ENCODE measurements at regions of chr2 and their contacts with region 1.

Region 1: DNA sequence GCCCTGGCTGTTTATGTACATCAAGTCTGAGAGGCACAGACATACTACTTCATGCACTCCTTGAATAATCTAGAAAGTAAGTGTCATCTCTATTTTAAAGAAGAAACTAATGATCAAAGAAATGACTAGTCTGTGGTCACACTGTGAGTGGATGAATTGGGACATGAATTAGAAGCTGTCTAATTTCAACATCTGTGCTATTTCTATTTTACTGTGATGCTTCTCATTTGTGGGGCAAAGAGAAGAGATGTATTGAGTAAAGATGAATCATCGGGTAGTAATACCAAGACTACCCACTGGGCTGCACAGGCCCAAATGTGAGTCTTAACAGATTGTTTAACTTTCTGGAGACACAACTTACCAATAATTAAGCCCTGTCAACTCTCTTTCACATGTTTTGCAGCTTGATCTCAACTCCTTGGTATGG is 42.4 kb upstream of the MTIF2 start:
- DNase-seq: peak; percentile 61
- ATAC-seq: peak; percentile 97
- H3K4me3 Mint-ChIP-seq: no peak overlapping the region
- H3K27ac Mint-ChIP-seq: no peak overlapping the region
- H3K4me1 Mint-ChIP-seq: peaks cover 23% of the 10 kb centered on the region
- H3K27me3 Mint-ChIP-seq: no peaks in the 10 kb centered on the region

Region 2: GRCh38 chr2:53751728-53752127 is 1559.7 kb before region 1 on chr2:
- CTCF ChIA-PET with region 1: no interaction called
- POLR2A ChIA-PET with region 1: no interaction called
- intact Hi-C with region 1: loop called in 1 of 2 experiments (anchors 5 kb)
- DNase-seq: no peak
- ATAC-seq: peak; percentile 92
- H3K4me3 Mint-ChIP-seq: no peak overlapping the region
- H3K27ac Mint-ChIP-seq: no peak overlapping the region
- H3K4me1 Mint-ChIP-seq: peaks cover 29% of the 10 kb centered on the region
- H3K27me3 Mint-ChIP-seq: no peaks in the 10 kb centered on the region

Region 3: DNA sequence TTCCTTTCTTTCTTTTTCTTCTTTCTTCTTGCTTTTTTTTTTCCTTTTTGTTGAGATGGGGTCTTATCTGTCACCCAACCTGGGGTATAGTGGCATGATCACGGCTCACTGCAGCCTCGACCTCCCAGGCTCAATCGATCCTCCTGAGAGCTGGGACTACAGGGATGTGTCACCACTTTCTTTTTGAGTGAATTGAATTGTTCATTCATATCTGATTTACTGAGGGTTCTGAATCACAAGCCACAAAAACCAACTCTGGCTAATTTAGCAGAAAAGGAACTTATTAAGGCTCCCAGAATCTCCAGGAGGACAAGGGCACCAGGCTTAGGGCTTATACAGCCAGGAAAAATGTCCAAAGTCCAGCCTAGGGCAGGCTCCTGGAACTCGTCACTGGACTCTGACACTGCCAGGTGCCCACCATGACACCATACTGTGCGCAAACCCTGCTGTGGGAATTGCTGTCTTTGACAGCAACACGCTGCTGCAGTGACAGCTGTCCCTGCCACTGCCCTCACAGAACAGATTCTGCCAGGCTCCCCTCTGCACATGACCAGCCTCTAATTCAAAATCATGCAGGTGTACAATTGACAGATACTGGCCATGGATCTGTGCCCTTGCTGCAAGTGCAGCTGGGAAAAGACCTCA is 630.9 kb before region 1 on chr2:
- CTCF ChIA-PET with region 1: no interaction called
- POLR2A ChIA-PET with region 1: no interaction called
- intact Hi-C with region 1: loop called in 1 of 2 experiments (anchors 2 kb)
- DNase-seq: peak; percentile 69
- ATAC-seq: peak; percentile 95
- H3K4me3 Mint-ChIP-seq: no peak overlapping the region
- H3K27ac Mint-ChIP-seq: peak overlapping the region; percentile 72
- H3K4me1 Mint-ChIP-seq: peaks cover 22% of the 10 kb centered on the region
- H3K27me3 Mint-ChIP-seq: peaks cover 61% of the 10 kb centered on the region

Region 4: GRCh38 chr2:55268907-55269644 is 42.4 kb before region 1 on chr2 and contains the start of gene MTIF2:
- CTCF ChIA-PET with region 1: no interaction called
- POLR2A ChIA-PET with region 1: interaction called, 3 read pairs
- intact Hi-C with region 1: loop called in 1 of 2 experiments (anchors 1 kb)
- DNase-seq: peak; percentile 94
- ATAC-seq: peak; percentile 95
- H3K4me3 Mint-ChIP-seq: peak within 1 kb of the TSS; percentile 96
- H3K27ac Mint-ChIP-seq: peak within 1 kb of the TSS; percentile 95
- H3K4me1 Mint-ChIP-seq: peaks cover 10% of the 10 kb centered on the region
- H3K27me3 Mint-ChIP-seq: no peaks in the 10 kb centered on the region
- total RNA-seq, gene MTIF2: 37.3 to 43.2 TPM

Region 5: GRCh38 chr2:55282110-55282917 is 29.1 kb before region 1 on chr2:
- CTCF ChIA-PET with region 1: interaction called, 4 read pairs
- POLR2A ChIA-PET with region 1: no interaction called
- intact Hi-C with region 1: loop called in 1 of 2 experiments (anchors 1 kb)
- DNase-seq: peak; percentile 91
- ATAC-seq: peak; percentile 99
- H3K4me3 Mint-ChIP-seq: peak overlapping the region; percentile 86
- H3K27ac Mint-ChIP-seq: peak overlapping the region; percentile 94
- H3K4me1 Mint-ChIP-seq: peaks cover 14% of the 10 kb centered on the region
- H3K27me3 Mint-ChIP-seq: no peaks in the 10 kb centered on the region

Region 6: DNA sequence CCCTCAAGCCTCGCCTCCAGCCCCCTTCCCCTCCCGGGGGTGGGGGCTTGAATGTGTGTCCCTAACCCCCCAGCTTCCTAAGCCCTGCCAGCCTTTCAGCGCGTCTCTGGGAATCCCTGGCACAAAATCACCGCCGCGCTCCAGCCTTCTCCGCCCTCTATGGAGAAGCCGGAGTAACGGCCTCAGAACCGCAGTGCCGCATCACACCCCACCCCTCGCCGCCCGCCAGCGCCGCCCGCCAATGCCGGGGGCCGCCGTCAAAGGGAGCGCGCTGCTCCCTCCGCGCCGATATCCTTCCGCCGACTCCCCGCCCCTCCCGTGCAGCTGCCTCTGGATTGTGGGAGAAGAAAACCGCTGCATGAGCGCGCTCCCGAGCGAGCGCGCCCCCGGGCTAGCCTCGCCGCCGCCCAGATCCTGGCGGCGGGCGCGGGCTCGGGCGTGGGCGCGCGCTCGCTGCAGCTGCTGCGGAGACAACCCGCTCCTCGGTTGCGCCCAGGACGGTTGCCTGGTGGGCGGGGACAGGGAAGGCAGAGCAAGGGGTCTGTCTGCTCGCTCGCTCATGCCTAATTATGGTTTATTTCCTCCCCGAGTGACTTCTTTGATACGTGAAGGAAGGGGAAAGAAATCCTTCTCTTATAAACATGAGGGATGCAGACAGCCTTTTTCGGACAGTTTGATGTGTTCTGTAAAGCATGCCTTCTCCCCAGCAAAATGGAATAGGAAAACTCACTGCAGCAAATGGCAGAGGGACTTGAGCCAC is 108.4 kb after region 1 on chr2 and contains the start of gene CCDC88A:
- CTCF ChIA-PET with region 1: no interaction called
- POLR2A ChIA-PET with region 1: no interaction called
- intact Hi-C with region 1: loop called in 1 of 2 experiments (anchors 1 kb)
- DNase-seq: peak; percentile 92
- ATAC-seq: peak; percentile 88
- H3K4me3 Mint-ChIP-seq: peak within 1 kb of the TSS; percentile 77
- H3K27ac Mint-ChIP-seq: peak within 1 kb of the TSS; percentile 69
- H3K4me1 Mint-ChIP-seq: peaks cover 34% of the 10 kb centered on the region
- H3K27me3 Mint-ChIP-seq: peaks cover 13% of the 10 kb centered on the region
- total RNA-seq, gene CCDC88A: 10.1 to 11.3 TPM

Region 7: DNA sequence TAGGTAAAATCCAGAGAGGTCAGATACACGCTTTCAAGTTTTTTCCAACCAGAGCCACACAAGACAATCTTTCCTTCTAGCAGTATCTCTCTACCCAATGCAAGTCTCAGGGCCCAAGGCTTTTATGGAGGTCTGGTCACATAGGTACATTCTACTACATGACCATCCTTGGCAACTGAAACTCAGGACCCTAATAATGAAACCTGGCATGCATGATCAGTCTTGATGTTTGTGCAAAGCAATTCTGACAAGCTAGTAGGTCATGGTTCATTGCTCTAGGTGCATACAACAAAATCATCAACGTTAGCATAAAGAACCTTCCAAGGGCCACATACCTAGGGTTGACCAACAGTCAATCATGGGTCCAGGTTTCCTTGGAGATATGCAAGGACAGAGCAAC is 141.4 kb after region 1 on chr2:
- CTCF ChIA-PET with region 1: no interaction called
- POLR2A ChIA-PET with region 1: no interaction called
- intact Hi-C with region 1: no loop called
- DNase-seq: no peak
- ATAC-seq: no peak
- H3K4me3 Mint-ChIP-seq: no peak overlapping the region
- H3K27ac Mint-ChIP-seq: no peak overlapping the region
- H3K4me1 Mint-ChIP-seq: no peaks in the 10 kb centered on the region
- H3K27me3 Mint-ChIP-seq: no peaks in the 10 kb centered on the region

Region 8: DNA sequence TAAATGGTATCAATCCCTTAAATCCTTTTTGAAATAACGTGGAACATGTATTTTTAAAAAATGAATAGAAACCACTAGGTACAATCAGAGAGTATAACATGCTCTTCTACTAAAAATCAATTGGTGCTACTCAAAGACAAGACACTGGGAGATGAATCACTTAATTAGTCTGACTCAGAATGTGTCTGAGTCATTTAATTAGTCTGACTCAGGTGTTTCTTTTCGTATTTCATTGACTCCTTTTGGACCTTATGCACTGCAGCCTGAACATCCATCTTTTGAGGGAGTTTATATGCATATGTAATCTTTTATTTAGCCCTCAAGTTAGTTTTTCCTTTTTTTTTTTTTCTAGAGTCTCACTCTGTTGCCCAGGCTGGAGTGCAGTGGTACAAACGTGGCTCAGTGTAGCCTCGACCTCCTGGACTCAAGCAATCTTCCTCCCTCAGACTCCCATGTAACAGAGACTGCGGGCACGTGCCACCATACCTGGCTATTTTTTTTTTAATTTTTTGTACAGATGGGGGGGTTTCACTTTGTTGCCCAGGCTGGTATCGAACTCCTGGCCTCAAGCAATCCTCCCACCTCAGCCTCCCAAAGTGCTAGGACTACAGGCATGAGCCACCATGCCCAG is 279.5 kb after region 1 on chr2:
- CTCF ChIA-PET with region 1: no interaction called
- POLR2A ChIA-PET with region 1: no interaction called
- intact Hi-C with region 1: loop called in 1 of 2 experiments (anchors 5 kb)
- DNase-seq: no peak
- ATAC-seq: peak; percentile 99
- H3K4me3 Mint-ChIP-seq: no peak overlapping the region
- H3K27ac Mint-ChIP-seq: peak overlapping the region; percentile 67
- H3K4me1 Mint-ChIP-seq: peaks cover 38% of the 10 kb centered on the region
- H3K27me3 Mint-ChIP-seq: no peaks in the 10 kb centered on the region

Measured in activated CD4-positive, alpha-beta T cell treated with anti-CD3 and anti-CD28 coated beads for 36 hours (primary cell).